Gastrocnemius medialis (tissue), 4 donors: ENCODE measurements at regions of chr19 and their contacts with region 1.

Region 1: DNA sequence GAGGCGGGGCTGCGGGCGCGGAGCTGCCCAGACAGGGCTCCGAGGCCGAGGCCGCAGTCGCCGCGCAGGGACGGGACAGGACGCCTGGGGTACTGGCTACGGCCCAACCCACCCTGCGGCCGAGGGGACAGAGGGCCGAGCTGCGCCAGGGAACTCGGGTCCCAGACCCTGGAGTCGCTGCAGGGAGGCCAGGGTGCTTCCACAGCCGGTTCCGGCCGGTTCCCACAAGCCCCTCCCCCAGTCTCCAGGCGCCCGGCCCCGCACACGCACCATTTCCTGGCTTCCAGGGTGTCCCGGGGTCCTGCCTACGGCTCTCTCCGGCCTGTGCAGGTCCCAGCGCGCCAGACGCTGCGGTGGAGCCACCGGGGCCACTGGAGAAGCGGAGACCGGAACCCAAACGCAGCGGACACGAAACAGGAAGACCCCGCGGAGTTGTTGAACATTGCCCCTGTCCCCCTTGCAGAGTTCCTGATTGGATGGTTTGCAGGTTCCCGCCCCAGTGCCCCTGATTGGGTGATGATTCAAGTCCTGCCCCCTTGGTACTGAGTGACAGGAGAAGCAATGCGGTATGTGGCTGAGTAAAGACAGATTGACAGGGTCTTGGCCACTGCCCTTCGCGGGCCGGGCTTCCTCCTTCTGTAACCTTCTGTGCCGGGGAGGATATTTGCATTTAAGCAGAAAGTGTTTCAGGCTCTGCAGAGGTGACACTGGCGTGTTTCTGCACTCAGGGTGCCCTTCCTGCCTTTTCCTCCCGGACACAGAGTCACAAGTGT is at the start of gene ZNF564:
- DNase-seq: peak; percentile 97 to 98
- ATAC-seq: peak; percentile 98
- H3K4me3 ChIP-seq: peak within 1 kb of the TSS; percentile 76 to 92 (median 86)
- H3K27ac ChIP-seq: peak within 1 kb of the TSS; percentile 92 to 97 (median 94)
- H3K4me1 ChIP-seq: peaks cover 25% of the 10 kb centered on the region in 2 donors
- H3K27me3 ChIP-seq: no peaks in the 10 kb centered on the region
- CTCF ChIP-seq: no peak
- POLR2A ChIP-seq: peak; percentile 49 to 82
- total RNA-seq, gene ZNF564: 3.3 to 5.0 (median 4.5) TPM

Region 2: DNA sequence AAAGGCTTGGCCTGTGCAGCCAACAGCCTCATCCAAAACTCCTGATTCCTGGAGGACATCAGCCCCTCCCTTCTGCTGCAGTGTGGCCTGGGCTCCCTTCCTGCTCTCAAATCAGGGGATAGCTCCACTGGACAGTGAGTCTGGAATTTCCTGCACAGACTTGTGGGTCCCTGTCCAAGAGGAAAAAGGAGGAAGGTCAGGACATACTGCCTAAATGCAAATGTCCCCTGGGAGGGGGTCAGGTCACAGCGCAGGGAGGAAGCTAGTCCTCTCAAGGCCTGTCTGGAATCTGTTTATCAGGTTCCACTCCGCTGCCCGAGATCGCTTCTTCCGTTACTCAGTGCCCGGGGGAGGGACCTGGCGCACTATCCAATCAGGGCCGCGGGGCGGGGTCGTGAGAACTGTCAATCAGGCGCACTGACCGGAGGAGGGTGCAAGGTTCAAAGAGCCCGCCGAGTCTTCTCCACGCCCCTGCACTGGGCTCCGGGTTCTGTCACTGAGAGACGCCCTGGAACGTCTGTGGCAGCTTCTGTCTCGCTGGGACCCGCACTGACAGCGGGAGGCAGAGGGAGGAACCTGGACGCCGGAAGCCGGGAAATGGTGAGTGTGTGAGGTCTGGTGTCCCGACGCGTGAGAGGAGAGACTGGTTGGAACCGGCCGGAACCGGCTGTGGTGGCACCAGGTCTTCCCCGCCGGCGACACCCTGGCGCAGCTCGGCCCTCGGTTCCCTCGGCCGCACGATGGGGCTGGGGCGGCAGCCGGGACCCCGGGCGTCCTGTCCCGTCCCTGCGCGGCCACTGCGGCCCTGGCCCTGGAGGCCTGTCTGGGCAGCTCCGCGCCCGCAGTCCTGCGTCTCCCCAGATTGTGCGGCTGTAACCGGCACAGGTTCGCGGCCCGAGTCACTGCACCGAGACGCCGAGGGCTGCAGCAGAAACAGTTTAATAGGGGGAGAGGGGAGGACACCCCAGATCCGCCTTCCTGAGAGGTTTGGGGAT is 784.4 kb before region 1 on chr19 and contains the start of gene ZNF441:
- in situ Hi-C with region 1: no loop called
- intact Hi-C with region 1: loop called (anchors 10 kb)
- DNase-seq: peak; percentile 95
- ATAC-seq: peak; percentile 97 to 98
- H3K4me3 ChIP-seq: peak within 1 kb of the TSS; percentile 71 to 86 (median 82)
- H3K27ac ChIP-seq: peak within 1 kb of the TSS; percentile 85 to 89 (median 86)
- H3K4me1 ChIP-seq: peaks cover 9 to 14% of the 10 kb centered on the region in 2 donors
- H3K27me3 ChIP-seq: no peaks in the 10 kb centered on the region
- CTCF ChIP-seq: no peak
- POLR2A ChIP-seq: peak; percentile 57 to 66
- total RNA-seq, gene ZNF441: 1.1 to 7.6 (median 2.9) TPM

Region 3: DNA sequence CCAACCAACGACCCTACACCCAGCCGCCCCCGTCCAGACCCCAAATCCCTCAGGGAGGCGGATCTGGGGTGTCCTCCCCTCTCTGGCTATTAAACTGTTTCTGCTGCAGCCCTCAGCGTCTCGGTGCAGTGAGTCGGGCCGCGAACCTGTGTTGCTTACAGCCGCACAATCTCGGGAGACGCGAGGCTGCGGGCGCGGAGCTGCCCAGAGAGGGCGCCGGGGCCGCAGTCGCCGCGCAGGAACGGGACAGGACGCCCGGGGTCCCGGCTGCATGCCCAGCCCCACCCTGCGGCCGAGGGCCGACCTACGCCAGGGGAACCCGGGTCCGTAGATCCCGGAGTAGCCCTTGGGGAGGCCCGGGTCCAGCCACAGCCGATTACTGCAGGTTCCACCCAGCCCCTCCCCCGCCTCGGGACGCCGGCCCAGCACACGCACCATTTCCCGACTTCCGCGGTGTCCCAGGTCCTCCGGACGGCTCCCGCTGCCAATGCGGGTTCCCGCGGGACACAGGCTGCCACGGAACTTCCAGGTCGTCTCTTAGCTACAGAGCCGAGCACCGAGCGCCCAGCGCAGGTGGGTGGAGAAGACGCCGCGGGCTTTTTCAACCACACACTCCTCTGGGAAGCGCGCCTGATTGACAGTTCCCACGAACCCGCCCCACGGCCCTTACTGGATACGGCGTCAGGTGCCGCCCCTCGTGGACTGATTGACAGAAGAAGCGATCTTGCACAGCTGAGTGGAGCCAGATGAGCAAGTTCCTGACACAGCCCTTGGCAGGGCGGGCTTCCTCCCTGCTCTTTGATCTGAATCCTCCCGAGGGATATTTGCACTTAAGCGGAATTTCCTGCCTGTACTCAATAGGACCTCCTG is 150.4 kb before region 1 on chr19 and contains the start of gene ZNF799:
- in situ Hi-C with region 1: no loop called
- intact Hi-C with region 1: loop called (anchors 2 kb)
- DNase-seq: peak; percentile 96
- ATAC-seq: peak; percentile 98 to 99
- H3K4me3 ChIP-seq: peak within 1 kb of the TSS; percentile 69 to 94 (median 80)
- H3K27ac ChIP-seq: peak within 1 kb of the TSS; percentile 83 to 95 (median 89)
- H3K4me1 ChIP-seq: peaks cover 5 to 6% of the 10 kb centered on the region in 2 donors
- H3K27me3 ChIP-seq: no peaks in the 10 kb centered on the region
- CTCF ChIP-seq: peak in 2 of 5 experiments; percentile 11 to 15
- POLR2A ChIP-seq: peak; percentile 49 to 57
- total RNA-seq, gene ZNF799: 1.3 to 3.6 (median 3.2) TPM

Region 4: DNA sequence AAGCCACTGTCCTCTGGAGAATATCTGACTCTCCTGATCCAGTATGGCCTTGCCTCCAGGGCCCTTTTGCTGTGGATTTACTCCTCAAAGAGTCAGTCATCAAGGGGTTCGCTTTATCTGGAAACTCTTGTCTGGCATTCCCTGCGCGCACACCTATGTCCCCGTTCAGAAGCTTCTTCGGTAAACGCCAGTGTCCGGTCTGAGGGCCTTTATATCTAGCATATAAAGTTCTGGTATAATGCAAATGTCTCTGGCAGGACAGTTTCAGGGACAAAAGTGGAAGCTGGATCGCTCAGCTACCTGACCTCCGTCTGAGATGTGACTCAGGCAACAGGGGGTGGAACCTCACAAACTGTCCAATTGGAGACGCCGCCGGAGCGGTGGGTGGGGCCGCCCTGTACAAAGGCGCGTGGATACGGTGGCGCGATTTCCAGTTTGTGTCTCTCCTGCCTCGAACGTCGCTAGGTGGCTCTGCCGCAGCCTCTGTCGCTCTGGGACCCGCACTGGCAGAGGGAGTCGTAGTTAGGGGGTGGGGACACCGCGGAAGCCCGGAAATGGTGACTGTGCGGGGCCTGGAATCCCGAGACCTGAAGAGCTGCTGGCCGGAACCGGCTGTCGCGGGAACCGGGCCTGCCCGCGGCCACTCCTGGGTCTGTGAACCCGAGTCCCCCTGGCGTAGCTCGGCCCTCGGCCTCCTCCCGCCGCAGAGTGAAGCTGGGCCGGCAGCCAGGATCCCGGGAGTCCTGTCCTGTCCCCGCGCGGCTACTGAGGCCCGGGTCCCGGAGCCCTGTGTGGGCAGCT is 56.0 kb before region 1 on chr19:
- in situ Hi-C with region 1: no loop called
- intact Hi-C with region 1: loop called (anchors 1 kb)
- DNase-seq: peak; percentile 89
- ATAC-seq: peak; percentile 98 to 99
- H3K4me3 ChIP-seq: peak overlapping the region; percentile 64 to 72 (median 69)
- H3K27ac ChIP-seq: peak overlapping the region; percentile 77 to 84 (median 80)
- H3K4me1 ChIP-seq: peaks cover 3% of the 10 kb centered on the region in 2 donors
- H3K27me3 ChIP-seq: no peaks in the 10 kb centered on the region
- CTCF ChIP-seq: peak in 2 of 5 experiments; percentile 38
- POLR2A ChIP-seq: peak; percentile 43 to 69

Region 5: DNA sequence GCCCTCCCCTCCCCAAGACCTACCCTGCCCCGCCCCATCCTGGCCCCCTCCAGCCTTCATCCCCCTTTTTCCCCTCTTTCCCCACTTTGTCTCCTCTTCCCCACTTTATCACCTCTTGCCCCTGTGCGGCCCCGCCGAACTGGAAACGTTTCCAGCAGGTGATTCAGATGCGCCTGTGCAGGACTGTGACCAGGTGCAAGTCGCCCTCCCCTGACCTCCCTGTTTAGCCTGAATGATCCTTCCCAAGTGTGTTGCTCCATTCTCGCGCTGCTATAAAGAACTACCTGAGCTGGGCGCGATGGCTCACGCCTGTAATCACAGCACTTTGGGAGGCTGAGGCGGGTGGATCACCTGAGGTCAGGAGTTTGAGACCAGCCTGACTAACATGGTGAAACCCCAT is 85.4 kb after region 1 on chr19:
- in situ Hi-C with region 1: no loop called
- intact Hi-C with region 1: no loop called
- DNase-seq: no peak
- ATAC-seq: no peak
- H3K4me3 ChIP-seq: no peak overlapping the region
- H3K27ac ChIP-seq: no peak overlapping the region
- H3K4me1 ChIP-seq: peaks cover 2 to 5% of the 10 kb centered on the region in 2 donors
- H3K27me3 ChIP-seq: no peaks in the 10 kb centered on the region
- CTCF ChIP-seq: no peak
- POLR2A ChIP-seq: no peak

Region 6: DNA sequence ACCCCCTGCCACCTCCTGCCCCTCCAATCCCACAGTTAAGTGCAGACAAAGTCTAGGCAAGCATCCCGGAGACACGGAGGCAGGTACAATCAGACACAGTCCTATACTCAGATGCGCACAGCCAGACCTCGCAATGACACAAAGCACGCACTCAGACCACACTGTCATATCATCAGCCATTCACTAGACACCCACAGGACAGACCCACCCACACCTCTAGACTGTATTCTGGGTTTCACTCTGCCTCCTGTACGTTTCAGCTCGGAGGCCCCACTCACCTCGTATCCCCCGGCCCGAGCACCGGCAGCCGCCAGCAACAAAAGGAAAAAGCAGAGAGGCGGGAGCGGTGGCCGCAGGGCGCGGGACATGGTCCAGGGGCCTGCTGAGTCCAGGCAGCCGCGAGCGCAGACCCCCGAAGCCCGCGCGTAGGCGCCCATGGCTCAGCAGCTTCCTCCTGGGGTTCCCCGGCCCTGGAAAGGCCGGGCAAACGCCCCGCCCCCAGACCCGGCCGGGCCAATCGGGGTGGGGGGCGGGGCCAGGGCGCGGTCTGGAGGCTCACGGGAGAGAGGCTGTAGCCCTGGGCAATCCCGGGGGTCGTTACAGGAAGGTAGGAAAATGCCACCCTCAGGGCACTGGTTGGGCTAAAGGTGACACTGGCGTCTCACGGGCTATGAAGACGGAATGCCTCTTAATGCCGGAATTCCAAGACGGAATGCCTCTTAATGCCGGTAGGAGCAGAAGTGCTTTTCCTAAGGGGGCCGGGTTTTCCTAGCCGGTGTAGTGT is 115.2 kb after region 1 on chr19 and contains the starts of genes MAN2B1 and WDR83:
- in situ Hi-C with region 1: loop called in 1 of 4 experiments (anchors 10 kb)
- intact Hi-C with region 1: loop called (anchors 5 kb)
- DNase-seq: peak; percentile 37 to 71
- ATAC-seq: peak; percentile 73 to 77
- H3K4me3 ChIP-seq: peak within 1 kb of the TSS; percentile 89 to 99 (median 96)
- H3K27ac ChIP-seq: peak within 1 kb of the TSS; percentile 82 to 99 (median 98)
- H3K4me1 ChIP-seq: peaks cover 33 to 36% of the 10 kb centered on the region in 2 donors
- H3K27me3 ChIP-seq: no peaks in the 10 kb centered on the region
- CTCF ChIP-seq: no peak
- POLR2A ChIP-seq: peak in 1 of 2 donors; percentile 55
- total RNA-seq, gene MAN2B1: 18.0 to 34.2 (median 29.3) TPM
- total RNA-seq, gene WDR83: 2.2 to 8.4 (median 3.7) TPM